Activated B cell treated with CpG ODN at 0.5 μM for 24 hours (primary cell): ENCODE measurements at regions of chr10 and their contacts with region 1.

Region 1: GRCh38 chr10:74176380-74177139 is 25.5 kb downstream of the ADK start:
- DNase-seq: peak; percentile 92
- ATAC-seq: peak; percentile 90
- H3K4me3 Mint-ChIP-seq: peak overlapping the region; percentile 92
- H3K27ac Mint-ChIP-seq: peak overlapping the region; percentile 97
- H3K4me1 Mint-ChIP-seq: peaks cover 55% of the 10 kb centered on the region
- H3K27me3 Mint-ChIP-seq: no peaks in the 10 kb centered on the region
- CTCF ChIP-seq: no peak

Region 2: GRCh38 chr10:73997787-73998622 is 178.6 kb before region 1 on chr10 and contains the start of gene VCL:
- CTCF ChIA-PET with region 1: no interaction called
- POLR2A ChIA-PET with region 1: no interaction called
- intact Hi-C with region 1: loop called (anchors 1 kb)
- DNase-seq: peak; percentile 91
- ATAC-seq: peak; percentile 97
- H3K4me3 Mint-ChIP-seq: peak within 1 kb of the TSS; percentile 96
- H3K27ac Mint-ChIP-seq: peak within 1 kb of the TSS; percentile 95
- H3K4me1 Mint-ChIP-seq: peaks cover 45% of the 10 kb centered on the region
- H3K27me3 Mint-ChIP-seq: no peaks in the 10 kb centered on the region
- CTCF ChIP-seq: no peak
- total RNA-seq, gene VCL: 21.3 and 25.8 TPM in 2 replicates

Region 3: DNA sequence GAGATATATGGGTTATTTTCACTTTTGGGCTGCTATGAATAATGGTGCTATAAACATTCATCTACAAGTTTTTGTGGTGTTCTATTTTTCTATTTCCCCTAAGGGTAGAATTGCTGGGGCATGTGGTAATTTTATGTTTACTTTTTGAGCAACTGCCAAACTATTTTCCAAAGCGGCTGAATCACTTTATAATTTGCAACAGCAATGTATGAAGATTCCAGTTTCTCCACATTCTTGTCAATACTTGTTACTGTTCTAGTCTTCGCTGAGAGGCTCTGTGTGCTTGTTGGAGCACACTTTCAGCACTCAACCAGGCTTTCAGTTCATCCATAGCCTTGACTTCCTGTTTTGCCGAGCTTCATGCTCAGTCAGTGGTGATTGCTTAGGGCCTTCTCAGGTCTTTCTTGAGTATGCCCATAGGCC is 13.4 kb after region 1 on chr10:
- CTCF ChIA-PET with region 1: no interaction called
- POLR2A ChIA-PET with region 1: interaction called, 38 read pairs
- intact Hi-C with region 1: loop called (anchors 1 kb)
- DNase-seq: no peak
- ATAC-seq: peak; percentile 97
- H3K4me3 Mint-ChIP-seq: peak overlapping the region; percentile 67
- H3K27ac Mint-ChIP-seq: peak overlapping the region; percentile 92
- H3K4me1 Mint-ChIP-seq: peaks cover 81% of the 10 kb centered on the region
- H3K27me3 Mint-ChIP-seq: no peaks in the 10 kb centered on the region
- CTCF ChIP-seq: no peak

Region 4: DNA sequence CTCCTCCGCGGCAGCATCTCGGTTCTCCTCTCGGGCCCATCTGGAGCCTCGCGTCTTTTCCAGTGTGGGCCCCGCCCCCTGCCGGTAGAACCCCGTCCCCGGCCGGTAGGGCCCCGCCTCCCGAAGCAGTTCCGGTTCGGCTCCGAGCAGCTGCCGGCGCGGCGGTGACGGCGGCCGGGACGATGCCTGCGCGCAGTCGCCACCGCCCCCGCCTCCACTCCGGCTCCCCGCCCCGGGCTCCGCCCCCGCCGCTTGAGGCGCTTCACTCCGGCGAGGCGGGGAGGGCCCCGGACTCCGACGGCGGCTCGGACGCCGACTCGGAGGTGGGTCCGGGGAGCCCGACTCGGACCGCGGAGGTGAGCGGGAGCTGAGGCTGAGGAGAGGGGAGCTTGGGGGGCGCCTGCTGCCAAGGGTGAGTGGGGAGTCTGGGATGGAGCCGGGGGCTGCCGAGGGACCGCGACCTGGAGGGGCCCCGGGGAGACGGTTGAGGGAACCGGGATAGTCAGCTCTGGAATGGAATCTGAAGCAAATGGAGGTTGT is 934.9 kb after region 1 on chr10 and contains the start of gene SAMD8:
- CTCF ChIA-PET with region 1: no interaction called
- POLR2A ChIA-PET with region 1: interaction called, 4 read pairs
- intact Hi-C with region 1: loop called (anchors 10 kb)
- DNase-seq: peak; percentile 95
- ATAC-seq: peak; percentile 81
- H3K4me3 Mint-ChIP-seq: peak within 1 kb of the TSS; percentile 90
- H3K27ac Mint-ChIP-seq: peak within 1 kb of the TSS; percentile 90
- H3K4me1 Mint-ChIP-seq: peaks cover 45% of the 10 kb centered on the region
- H3K27me3 Mint-ChIP-seq: no peaks in the 10 kb centered on the region
- CTCF ChIP-seq: no peak
- total RNA-seq, gene SAMD8: 25.8 and 29.1 TPM in 2 replicates

Region 5: DNA sequence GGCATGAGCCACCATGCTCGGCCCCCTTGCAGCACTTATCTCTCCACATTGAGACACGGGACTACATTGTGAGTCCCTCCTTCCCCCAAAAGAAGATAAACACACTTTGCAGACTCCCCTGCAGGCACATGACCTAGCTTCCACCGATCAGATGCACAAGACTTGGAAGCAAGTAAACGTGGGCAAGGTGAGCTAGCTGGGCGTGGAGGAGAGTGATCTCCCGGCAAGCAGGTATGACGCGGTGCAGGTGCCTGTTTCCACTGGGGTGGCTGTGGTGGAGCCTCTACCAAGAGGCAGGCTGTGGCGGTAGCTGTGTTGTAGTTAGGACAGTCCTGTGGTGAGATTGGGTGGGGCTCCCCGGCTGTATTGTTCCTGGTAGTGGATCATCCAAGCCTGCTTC is 1066.9 kb after region 1 on chr10:
- CTCF ChIA-PET with region 1: no interaction called
- POLR2A ChIA-PET with region 1: interaction called, 12 read pairs
- intact Hi-C with region 1: no loop called
- DNase-seq: no peak
- ATAC-seq: no peak
- H3K4me3 Mint-ChIP-seq: no peak overlapping the region
- H3K27ac Mint-ChIP-seq: no peak overlapping the region
- H3K4me1 Mint-ChIP-seq: no peaks in the 10 kb centered on the region
- H3K27me3 Mint-ChIP-seq: no peaks in the 10 kb centered on the region
- CTCF ChIP-seq: no peak